H1 (cell line): ENCODE measurements at regions of chr3 and their contacts with region 1.

Region 1: GRCh38 chr3:32570421-32571191 is at the start of gene DYNC1LI1:
- DNase-seq: peak; percentile 74 to 97
- H3K4me3 ChIP-seq: peak within 1 kb of the TSS; percentile 82 to 99 (median 95)
- H3K27ac ChIP-seq: peak within 1 kb of the TSS; percentile 98
- H3K4me1 ChIP-seq: peaks cover 0 to 9% (median 1%) of the 10 kb centered on the region in 4 experiments; a peak in 5 of 7 replicates
- H3K27me3 ChIP-seq: no peaks in the 10 kb centered on the region
- CTCF ChIP-seq: no peak
- EP300 ChIP-seq: no peak; a peak in 1 of 3 replicates
- POLR2A ChIP-seq: peak; percentile 91 to 99
- RAD21 ChIP-seq: no peak
- total RNA-seq, gene DYNC1LI1: 44.2 and 45.1 TPM in 2 replicates

Region 2: GRCh38 chr3:32557643-32558352 is 12.8 kb before region 1 on chr3:
- CTCF ChIA-PET with region 1: interaction called, 3 read pairs
- POLR2A ChIA-PET with region 1: interaction called, 12 read pairs
- DNase-seq: no peak
- H3K4me3 ChIP-seq: no peak overlapping the region
- H3K27ac ChIP-seq: no peak overlapping the region
- H3K4me1 ChIP-seq: peaks cover 0 to 3% (median 0%) of the 10 kb centered on the region in 4 experiments; a peak in 2 of 7 replicates
- H3K27me3 ChIP-seq: no peaks in the 10 kb centered on the region
- CTCF ChIP-seq: no peak
- EP300 ChIP-seq: no peak
- POLR2A ChIP-seq: no peak
- RAD21 ChIP-seq: no peak